CD8-positive, alpha-beta memory T cell (primary cell): ENCODE measurements at regions of chr11 and their contacts with region 1.

Region 1: DNA sequence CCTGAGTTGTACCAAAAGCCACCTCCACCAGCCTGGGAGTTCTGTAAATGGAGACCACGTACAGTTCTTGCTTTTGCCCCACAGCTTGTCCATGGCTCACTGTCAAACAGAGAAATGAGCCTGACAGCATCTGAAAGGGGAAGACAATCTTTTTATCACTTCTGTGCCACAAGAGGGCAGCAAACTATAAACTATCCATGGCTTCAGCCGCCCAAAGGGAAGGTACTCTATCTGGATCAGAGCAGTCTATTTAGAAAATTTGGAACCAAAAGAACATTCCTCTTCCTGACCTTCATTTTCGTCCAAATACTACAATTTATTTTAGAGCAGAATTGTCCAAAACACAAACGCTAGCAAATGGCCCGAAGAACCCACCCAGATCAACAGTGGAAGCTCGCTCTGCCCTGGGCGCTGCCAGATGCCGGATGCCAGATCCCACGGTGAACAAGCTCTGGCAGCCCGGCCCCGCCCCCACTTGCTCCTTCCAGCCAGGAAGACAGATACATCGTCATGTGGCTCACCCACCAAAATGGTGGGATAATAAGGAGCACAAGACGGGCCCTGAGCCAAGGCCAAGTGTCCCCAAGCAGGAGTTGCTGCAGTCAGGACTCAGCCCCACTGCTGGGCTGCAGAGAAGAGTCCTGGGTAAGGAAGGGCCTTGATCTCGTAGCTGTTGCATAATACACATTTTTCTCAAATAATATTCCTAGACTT is 23.9 kb upstream of the SCGB1A1 start:
- DNase-seq: peak; percentile 22 to 62 (median 52)
- H3K4me3 ChIP-seq: no peak overlapping the region
- H3K4me3 Mint-ChIP-seq: no peak overlapping the region
- H3K27ac ChIP-seq: no peak overlapping the region
- H3K27ac Mint-ChIP-seq: no peak overlapping the region
- H3K4me1 ChIP-seq: peaks cover 19% of the 10 kb centered on the region
- H3K4me1 Mint-ChIP-seq: peaks cover 10 to 20% (median 16%) of the 10 kb centered on the region in 3 donors
- H3K27me3 ChIP-seq: no peaks in the 10 kb centered on the region
- H3K27me3 Mint-ChIP-seq: peaks cover 0 to 2% of the 10 kb centered on the region in 2 donors

Region 2: DNA sequence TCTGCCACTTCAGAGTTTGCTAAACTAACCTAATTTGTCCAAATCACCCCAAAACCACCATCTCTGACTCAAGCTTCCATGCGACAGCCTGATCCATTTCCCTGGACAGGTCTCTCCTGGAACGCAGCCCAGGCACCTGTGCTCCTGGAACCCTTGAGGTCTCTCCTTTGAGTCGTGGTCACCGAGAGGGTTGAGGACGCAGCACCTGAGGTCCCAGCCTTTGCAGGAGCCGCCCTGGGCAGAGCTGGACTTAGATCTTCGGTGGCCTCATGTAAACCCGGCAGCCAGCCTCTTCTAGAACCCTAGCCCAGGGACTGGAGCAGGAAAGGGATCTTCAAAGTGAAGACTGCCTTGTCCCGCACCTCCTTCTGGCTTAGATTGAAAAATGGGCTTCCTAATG is 20.2 kb before region 1 on chr11:
- CTCF ChIA-PET with region 1: interaction called, 14 read pairs
- POLR2A ChIA-PET with region 1: no interaction called
- DNase-seq: no peak
- H3K4me3 ChIP-seq: no peak overlapping the region
- H3K4me3 Mint-ChIP-seq: no peak overlapping the region
- H3K27ac ChIP-seq: no peak overlapping the region
- H3K27ac Mint-ChIP-seq: no peak overlapping the region
- H3K4me1 ChIP-seq: no peaks in the 10 kb centered on the region
- H3K4me1 Mint-ChIP-seq: peaks cover 2 to 37% (median 18%) of the 10 kb centered on the region in 3 donors
- H3K27me3 ChIP-seq: no peaks in the 10 kb centered on the region
- H3K27me3 Mint-ChIP-seq: peaks cover 0 to 2% of the 10 kb centered on the region in 2 donors

Region 3: DNA sequence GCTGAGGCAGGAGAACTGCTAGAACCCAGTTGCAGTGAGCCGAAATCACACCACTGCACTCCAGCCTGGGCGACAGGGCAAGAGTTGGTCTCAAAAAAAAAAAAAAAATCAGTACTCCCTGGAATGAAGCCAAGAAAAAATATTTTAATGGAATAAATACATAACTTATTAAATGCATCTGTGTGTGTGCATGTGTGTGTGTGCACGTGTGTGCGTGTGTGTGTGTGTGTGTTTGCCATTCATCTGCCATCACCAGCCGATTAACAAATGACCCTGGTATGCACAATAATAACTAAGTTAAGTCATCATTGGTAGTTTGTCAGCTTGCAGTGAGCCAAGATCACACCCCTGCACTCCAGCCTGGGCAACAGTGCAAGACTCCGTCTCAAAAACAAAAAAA is 11.2 kb before region 1 on chr11:
- CTCF ChIA-PET with region 1: interaction called, 23 read pairs
- POLR2A ChIA-PET with region 1: no interaction called
- DNase-seq: no peak
- H3K4me3 ChIP-seq: no peak overlapping the region
- H3K4me3 Mint-ChIP-seq: no peak overlapping the region
- H3K27ac ChIP-seq: no peak overlapping the region
- H3K27ac Mint-ChIP-seq: no peak overlapping the region
- H3K4me1 ChIP-seq: peaks cover 10% of the 10 kb centered on the region
- H3K4me1 Mint-ChIP-seq: peaks cover 12 to 31% (median 24%) of the 10 kb centered on the region in 3 donors
- H3K27me3 ChIP-seq: no peaks in the 10 kb centered on the region
- H3K27me3 Mint-ChIP-seq: no peaks in the 10 kb centered on the region

Region 4: DNA sequence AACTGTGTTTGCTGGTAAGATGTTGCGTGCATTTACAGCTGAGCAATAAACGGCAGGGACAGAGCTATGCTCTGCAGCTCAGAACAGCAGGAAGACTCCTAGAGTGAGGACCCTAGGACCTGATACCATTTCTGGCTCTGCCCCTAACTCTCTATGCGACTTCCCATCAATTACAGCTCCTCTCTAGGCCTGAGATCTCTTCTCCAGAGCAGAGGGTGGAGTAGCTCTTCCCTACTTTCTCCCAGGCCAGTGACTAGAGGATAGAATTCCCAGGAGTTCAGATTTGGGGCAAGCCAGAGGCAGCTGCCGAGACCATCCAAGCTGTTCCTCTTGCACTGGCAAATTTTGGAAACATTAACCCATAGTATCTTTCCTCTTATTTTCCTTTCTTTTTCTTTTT is 11.1 kb after region 1 on chr11:
- CTCF ChIA-PET with region 1: interaction called, 20 read pairs
- POLR2A ChIA-PET with region 1: no interaction called
- DNase-seq: no peak
- H3K4me3 ChIP-seq: no peak overlapping the region
- H3K4me3 Mint-ChIP-seq: no peak overlapping the region
- H3K27ac ChIP-seq: no peak overlapping the region
- H3K27ac Mint-ChIP-seq: peak overlapping the region in 1 of 8 donors; percentile 92
- H3K4me1 ChIP-seq: peaks cover 23% of the 10 kb centered on the region
- H3K4me1 Mint-ChIP-seq: peaks cover 19 to 27% (median 21%) of the 10 kb centered on the region in 3 donors
- H3K27me3 ChIP-seq: no peaks in the 10 kb centered on the region
- H3K27me3 Mint-ChIP-seq: no peaks in the 10 kb centered on the region

Region 5: GRCh38 chr11:62542750-62543567 is 148.0 kb after region 1 on chr11:
- CTCF ChIA-PET with region 1: interaction called, 18 read pairs
- POLR2A ChIA-PET with region 1: no interaction called
- DNase-seq: peak; percentile 61 to 86 (median 70)
- H3K4me3 ChIP-seq: peak overlapping the region; percentile 76
- H3K4me3 Mint-ChIP-seq: peak overlapping the region; percentile 92 to 99 (median 98)
- H3K27ac ChIP-seq: peak overlapping the region; percentile 96
- H3K27ac Mint-ChIP-seq: peak overlapping the region; percentile 92 to 100 (median 97)
- H3K4me1 ChIP-seq: peaks cover 72% of the 10 kb centered on the region
- H3K4me1 Mint-ChIP-seq: peaks cover 66 to 83% (median 74%) of the 10 kb centered on the region in 3 donors
- H3K27me3 ChIP-seq: no peaks in the 10 kb centered on the region
- H3K27me3 Mint-ChIP-seq: peaks cover 0 to 3% of the 10 kb centered on the region in 2 donors

Region 6: GRCh38 chr11:62556108-62556871 is 161.3 kb after region 1 on chr11:
- CTCF ChIA-PET with region 1: interaction called, 37 read pairs
- POLR2A ChIA-PET with region 1: interaction called, 3 read pairs
- DNase-seq: peak; percentile 74 to 95 (median 83)
- H3K4me3 ChIP-seq: peak overlapping the region; percentile 70
- H3K4me3 Mint-ChIP-seq: peak overlapping the region; percentile 80 to 95 (median 85)
- H3K27ac ChIP-seq: peak overlapping the region; percentile 95
- H3K27ac Mint-ChIP-seq: peak overlapping the region; percentile 97 to 100 (median 99)
- H3K4me1 ChIP-seq: peaks cover 96% of the 10 kb centered on the region
- H3K4me1 Mint-ChIP-seq: peaks cover 91 to 97% (median 96%) of the 10 kb centered on the region in 3 donors
- H3K27me3 ChIP-seq: no peaks in the 10 kb centered on the region
- H3K27me3 Mint-ChIP-seq: peaks cover 0 to 5% of the 10 kb centered on the region in 2 donors